H1 (cell line): ENCODE measurements at regions of chr2 and their contacts with region 1.

Region 1: GRCh38 chr2:126482582-126483464 is 173.1 kb upstream of the GYPC start:
- DNase-seq: peak; percentile 5 to 48
- H3K4me3 ChIP-seq: no peak overlapping the region
- H3K27ac ChIP-seq: no peak overlapping the region
- H3K4me1 ChIP-seq: no peaks in the 10 kb centered on the region; a peak in 2 of 7 replicates
- H3K27me3 ChIP-seq: no peaks in the 10 kb centered on the region
- CTCF ChIP-seq: peak; percentile 63 to 76 (median 66)
- EP300 ChIP-seq: no peak
- POLR2A ChIP-seq: no peak
- RAD21 ChIP-seq: peak; percentile 66 to 70

Region 2: GRCh38 chr2:126409850-126410249 is 73.0 kb before region 1 on chr2:
- CTCF ChIA-PET with region 1: no interaction called
- POLR2A ChIA-PET with region 1: no interaction called
- DNase-seq: no peak
- H3K4me3 ChIP-seq: no peak overlapping the region
- H3K27ac ChIP-seq: no peak overlapping the region
- H3K4me1 ChIP-seq: no peaks in the 10 kb centered on the region
- H3K27me3 ChIP-seq: no peaks in the 10 kb centered on the region
- CTCF ChIP-seq: no peak
- EP300 ChIP-seq: no peak
- POLR2A ChIP-seq: no peak
- RAD21 ChIP-seq: no peak

Region 3: GRCh38 chr2:126527836-126528507 is 45.1 kb after region 1 on chr2:
- CTCF ChIA-PET with region 1: interaction called, 15 read pairs
- POLR2A ChIA-PET with region 1: no interaction called
- DNase-seq: peak; percentile 39 to 79
- H3K4me3 ChIP-seq: no peak overlapping the region
- H3K27ac ChIP-seq: no peak overlapping the region
- H3K4me1 ChIP-seq: no peaks in the 10 kb centered on the region
- H3K27me3 ChIP-seq: no peaks in the 10 kb centered on the region
- CTCF ChIP-seq: peak; percentile 74 to 88 (median 85)
- EP300 ChIP-seq: no peak
- POLR2A ChIP-seq: no peak
- RAD21 ChIP-seq: peak; percentile 87 to 88